HepG2 (cell line): ENCODE measurements at regions of chr20 and their contacts with region 1.

Region 1: GRCh38 chr20:7935027-7935551 is 5.2 kb downstream of the HAO1 start:
- DNase-seq: no peak
- ATAC-seq: no peak
- H3K4me3 ChIP-seq: no peak overlapping the region
- H3K27ac ChIP-seq: no peak overlapping the region
- H3K4me1 ChIP-seq: peaks cover 14% of the 10 kb centered on the region
- H3K27me3 ChIP-seq: no peaks in the 10 kb centered on the region
- CTCF ChIP-seq: no peak
- EP300 ChIP-seq: no peak
- POLR2A ChIP-seq: no peak
- RAD21 ChIP-seq: no peak

Region 2: DNA sequence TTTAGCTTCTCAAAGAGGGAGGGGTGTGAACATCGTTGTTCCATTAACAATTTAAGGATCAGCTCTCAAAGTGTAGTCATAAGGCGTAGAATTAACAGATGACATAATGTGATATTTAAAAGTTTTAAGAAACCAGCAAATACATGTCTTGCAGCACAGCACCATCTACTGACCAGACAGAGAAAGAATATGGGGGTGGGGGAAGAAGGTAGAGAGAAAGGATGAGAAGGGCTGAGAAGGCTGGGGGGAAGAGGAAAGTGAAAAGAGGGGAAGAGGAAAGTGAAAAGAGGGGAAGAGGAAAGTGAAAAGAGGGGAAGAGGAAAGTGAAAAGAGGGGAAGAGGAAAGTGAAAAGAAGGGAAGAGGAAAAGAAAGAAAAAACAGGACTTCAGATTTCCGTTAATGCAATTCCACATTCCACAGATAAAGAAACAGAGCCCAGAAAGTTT is 75.7 kb before region 1 on chr20:
- CTCF ChIA-PET with region 1: no interaction called
- POLR2A ChIA-PET with region 1: no interaction called
- in situ Hi-C with region 1: no loop called
- intact Hi-C with region 1: no loop called
- DNase-seq: peak; percentile 47
- ATAC-seq: peak; percentile 79
- H3K4me3 ChIP-seq: no peak overlapping the region
- H3K27ac ChIP-seq: no peak overlapping the region
- H3K4me1 ChIP-seq: no peaks in the 10 kb centered on the region
- H3K27me3 ChIP-seq: no peaks in the 10 kb centered on the region
- CTCF ChIP-seq: peak; percentile 86
- EP300 ChIP-seq: no peak
- POLR2A ChIP-seq: no peak
- RAD21 ChIP-seq: peak; percentile 67

Region 3: DNA sequence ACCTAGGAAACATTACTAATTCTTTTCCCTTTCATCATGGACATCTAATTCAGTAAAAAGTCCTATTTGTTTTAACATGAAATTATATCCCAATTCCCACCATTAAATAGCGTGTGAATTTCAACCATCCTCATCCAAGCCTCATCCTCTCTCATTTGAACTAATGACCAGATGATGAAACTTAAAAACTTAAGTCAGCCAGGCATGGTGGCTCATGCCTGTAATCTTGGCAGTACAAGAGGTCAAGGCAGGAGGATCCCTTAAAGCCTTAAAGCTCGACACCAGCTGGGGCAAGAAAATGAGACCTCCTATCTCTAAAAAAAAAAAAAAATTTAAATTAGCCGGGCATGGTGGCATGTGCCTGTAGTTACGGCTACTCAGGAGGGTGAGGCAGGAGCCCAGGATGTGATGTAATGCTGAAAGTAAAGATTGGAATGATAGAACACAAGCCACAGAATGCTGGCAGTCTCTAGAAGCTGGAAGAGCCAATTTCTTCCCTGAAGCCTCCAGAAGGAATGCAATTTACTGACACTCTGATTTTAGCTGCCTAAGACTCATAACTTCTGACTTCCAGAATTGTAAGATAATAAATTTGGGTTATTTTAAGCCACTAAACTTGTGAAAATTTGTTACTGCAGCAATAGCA is 32.2 kb after region 1 on chr20:
- CTCF ChIA-PET with region 1: no interaction called
- POLR2A ChIA-PET with region 1: no interaction called
- in situ Hi-C with region 1: no loop called
- intact Hi-C with region 1: no loop called
- DNase-seq: no peak
- ATAC-seq: no peak
- H3K4me3 ChIP-seq: no peak overlapping the region
- H3K27ac ChIP-seq: no peak overlapping the region
- H3K4me1 ChIP-seq: no peaks in the 10 kb centered on the region
- H3K27me3 ChIP-seq: no peaks in the 10 kb centered on the region
- CTCF ChIP-seq: no peak
- EP300 ChIP-seq: no peak
- POLR2A ChIP-seq: no peak
- RAD21 ChIP-seq: no peak

Region 4: DNA sequence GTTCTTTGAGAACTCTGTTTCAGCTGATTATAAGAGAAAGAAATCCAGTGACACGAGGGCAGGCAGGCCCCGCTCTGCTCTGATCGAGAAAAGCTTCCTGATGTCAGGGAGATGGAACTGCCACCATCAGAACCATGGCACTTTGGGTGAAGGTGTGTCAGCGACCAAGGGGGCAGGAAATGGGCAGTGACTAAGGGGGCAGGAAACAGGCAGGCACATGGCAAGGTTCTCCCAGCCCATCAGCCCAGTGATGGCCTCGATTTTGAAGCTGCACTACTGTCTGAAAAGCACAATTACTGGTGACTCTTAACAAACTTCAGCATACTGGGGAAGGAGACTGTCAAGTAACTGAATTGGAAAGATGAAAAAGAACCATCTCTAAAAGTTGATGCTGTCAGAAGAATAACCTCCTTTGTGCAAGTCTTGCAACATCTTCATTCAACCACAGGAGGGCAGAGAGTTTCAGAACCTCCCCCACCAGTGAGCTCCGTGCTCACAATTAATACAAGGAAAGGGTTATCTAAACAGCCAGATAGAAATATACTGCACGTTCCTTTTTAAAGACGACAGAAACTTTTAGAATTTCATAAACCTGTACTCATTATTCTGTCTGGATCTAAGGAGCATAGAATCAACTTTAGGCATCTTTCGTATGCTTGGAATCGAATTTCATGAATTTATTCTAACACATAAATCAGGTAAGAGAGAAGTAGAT is 45.4 kb after region 1 on chr20:
- CTCF ChIA-PET with region 1: no interaction called
- POLR2A ChIA-PET with region 1: no interaction called
- in situ Hi-C with region 1: no loop called
- intact Hi-C with region 1: loop called (anchors 2 kb)
- DNase-seq: peak; percentile 79
- ATAC-seq: peak; percentile 88
- H3K4me3 ChIP-seq: peak overlapping the region in 1 of 3 experiments; percentile 0; a peak in 1 of 6 replicates
- H3K27ac ChIP-seq: no peak overlapping the region
- H3K4me1 ChIP-seq: peaks cover 22% of the 10 kb centered on the region
- H3K27me3 ChIP-seq: no peaks in the 10 kb centered on the region
- CTCF ChIP-seq: peak; percentile 76
- EP300 ChIP-seq: no peak
- POLR2A ChIP-seq: no peak
- RAD21 ChIP-seq: peak; percentile 50

Region 5: GRCh38 chr20:7989379-7989778 is 54.3 kb after region 1 on chr20:
- CTCF ChIA-PET with region 1: interaction called, 6 read pairs
- POLR2A ChIA-PET with region 1: no interaction called
- in situ Hi-C with region 1: no loop called
- intact Hi-C with region 1: loop called (anchors 2 kb)
- DNase-seq: no peak
- ATAC-seq: no peak
- H3K4me3 ChIP-seq: no peak overlapping the region
- H3K27ac ChIP-seq: no peak overlapping the region
- H3K4me1 ChIP-seq: 0 out of 2 replicates have a peak, but pooled peaks cover 1% of the 10 kb centered on the region
- H3K27me3 ChIP-seq: no peaks in the 10 kb centered on the region
- CTCF ChIP-seq: peak; percentile 18; the same call in 1 of the 2 replicates
- EP300 ChIP-seq: no peak
- POLR2A ChIP-seq: no peak
- RAD21 ChIP-seq: no peak

Region 6: DNA sequence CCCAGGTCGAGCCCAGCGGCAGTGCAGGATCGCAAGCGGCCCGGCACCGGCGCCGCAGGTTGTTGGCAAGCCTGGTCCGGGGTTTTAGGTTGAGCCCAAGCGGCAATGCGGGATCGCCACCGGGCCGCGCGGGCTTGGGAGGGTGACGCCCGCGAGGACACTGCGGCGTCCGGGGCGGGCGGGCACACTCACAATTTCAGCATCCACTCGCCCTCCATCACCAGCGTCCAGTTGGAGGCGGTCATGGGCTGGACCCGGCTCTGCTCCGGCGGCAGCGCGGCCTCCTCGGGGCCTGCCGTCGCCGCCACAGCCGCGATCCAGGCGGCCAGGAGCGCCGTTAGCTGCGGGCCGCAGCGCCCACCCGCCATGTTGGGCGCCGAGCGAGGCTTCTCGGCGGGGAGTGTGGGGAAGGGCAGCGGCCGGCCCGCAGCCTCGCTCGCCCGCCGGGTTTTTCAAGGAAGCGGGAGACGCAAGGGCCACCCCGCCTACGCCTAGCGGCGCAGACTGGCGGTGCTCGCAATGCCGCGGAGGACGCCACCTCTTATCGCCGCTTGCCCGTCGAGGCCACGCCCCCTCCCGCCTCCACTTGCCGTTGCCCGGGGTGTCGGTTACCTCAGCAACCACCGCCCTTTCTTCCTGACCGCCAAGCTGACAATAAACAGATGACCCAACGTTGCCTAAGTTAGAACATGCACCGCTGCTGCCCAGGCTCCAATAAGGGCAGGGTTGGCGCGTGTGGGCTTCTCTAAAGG is 84.3 kb after region 1 on chr20 and contains the start of gene TMX4:
- CTCF ChIA-PET with region 1: no interaction called
- POLR2A ChIA-PET with region 1: interaction called, 4 read pairs
- in situ Hi-C with region 1: no loop called
- intact Hi-C with region 1: loop called (anchors 1 kb)
- DNase-seq: peak; percentile 98
- ATAC-seq: peak; percentile 92
- H3K4me3 ChIP-seq: peak within 1 kb of the TSS; percentile 74 to 89 (median 87)
- H3K27ac ChIP-seq: peak within 1 kb of the TSS; percentile 94
- H3K4me1 ChIP-seq: peaks cover 19% of the 10 kb centered on the region
- H3K27me3 ChIP-seq: no peaks in the 10 kb centered on the region
- CTCF ChIP-seq: peak; percentile 76
- EP300 ChIP-seq: peak; percentile 32 to 85; a peak in 3 of 4 replicates
- POLR2A ChIP-seq: peak; percentile 97 to 99
- RAD21 ChIP-seq: peak; percentile 90
- total RNA-seq, gene TMX4: 15.4 and 21.4 TPM in 2 replicates